ENCODE measurements at regions of chr17 and their contacts with region 1.

Region 1: GRCh38 chr17:57747221-57748017 is 2.3 kb upstream of the CCDC182 start:
- DNase-seq: peak; percentile 57
- H3K4me3 Mint-ChIP-seq: no peak overlapping the region
- H3K27ac Mint-ChIP-seq: no peak overlapping the region
- H3K4me1 Mint-ChIP-seq: peaks cover 7% of the 10 kb centered on the region
- H3K27me3 Mint-ChIP-seq: peaks cover 42% of the 10 kb centered on the region

Region 2: GRCh38 chr17:57671667-57672632 is 75.5 kb before region 1 on chr17:
- CTCF ChIA-PET with region 1: interaction called, 11 read pairs
- DNase-seq: peak; percentile 79
- H3K4me3 Mint-ChIP-seq: peak overlapping the region; percentile 10
- H3K27ac Mint-ChIP-seq: peak overlapping the region; percentile 88
- H3K4me1 Mint-ChIP-seq: peaks cover 28% of the 10 kb centered on the region
- H3K27me3 Mint-ChIP-seq: no peaks in the 10 kb centered on the region

Region 3: GRCh38 chr17:57861000-57861789 is 113.8 kb after region 1 on chr17:
- CTCF ChIA-PET with region 1: no interaction called
- DNase-seq: peak; percentile 59
- H3K4me3 Mint-ChIP-seq: peak overlapping the region; percentile 62
- H3K27ac Mint-ChIP-seq: no peak overlapping the region
- H3K4me1 Mint-ChIP-seq: peaks cover 12% of the 10 kb centered on the region
- H3K27me3 Mint-ChIP-seq: peaks cover 74% of the 10 kb centered on the region

Measured in activated naive CD4-positive, alpha-beta T cell treated with anti-CD3 and anti-CD28 coated beads, Interleukin-2, amount 10 ng/mL, durations not matched to agents 7 days and 5 days (primary cell).